ENCODE measurements at regions of chr4 and their contacts with region 1.

Region 1: DNA sequence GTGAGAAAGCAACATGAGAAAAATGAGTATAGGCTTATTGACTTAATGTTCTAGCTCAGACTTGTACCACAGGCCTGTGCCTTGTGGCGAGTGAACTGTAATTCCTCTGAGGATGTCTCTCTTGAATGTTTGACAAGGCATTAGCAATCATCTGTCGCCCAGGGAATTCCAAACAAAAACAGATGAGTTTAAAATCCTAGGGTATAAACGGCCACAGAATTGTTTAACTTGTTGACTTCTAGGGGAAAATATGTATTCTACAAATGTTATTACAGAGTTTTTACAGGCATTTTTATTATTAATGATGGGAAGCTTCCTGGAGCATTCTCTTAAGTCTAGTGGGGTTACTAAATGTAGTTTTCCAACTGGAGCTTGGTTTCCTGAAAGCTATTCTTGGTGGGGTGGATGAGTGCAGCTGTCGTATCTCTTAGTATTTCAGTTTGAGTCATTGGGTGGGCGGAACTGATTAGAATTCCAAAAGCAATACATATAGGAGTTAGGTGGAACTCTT is 40.6 kb downstream of the ARHGAP10 start:
- DNase-seq: no peak
- ATAC-seq: peak; percentile 51

Region 2: GRCh38 chr4:147822128-147822527 is 49.6 kb after region 1 on chr4:
- intact Hi-C with region 1: loop called (anchors 5 kb)
- DNase-seq: peak; percentile 88
- ATAC-seq: peak; percentile 82